Dendritic cell treated with granulocyte-macrophage colony-stimulating factor and Interleukin-4, amounts not matched to agents 40 ng/mL and 50 ng/mL, for 4 days (primary cell): ENCODE measurements at regions of chr11 and their contacts with region 1.

Region 1: GRCh38 chr11:111878849-111879636 is at the starts of genes CFAP68 and FDXACB1:
- H3K4me3 Mint-ChIP-seq: peak within 1 kb of the TSS; percentile 94
- H3K27ac Mint-ChIP-seq: peak within 1 kb of the TSS; percentile 97
- H3K4me1 Mint-ChIP-seq: peaks cover 29% of the 10 kb centered on the region
- H3K27me3 Mint-ChIP-seq: no peaks in the 10 kb centered on the region

Region 2: DNA sequence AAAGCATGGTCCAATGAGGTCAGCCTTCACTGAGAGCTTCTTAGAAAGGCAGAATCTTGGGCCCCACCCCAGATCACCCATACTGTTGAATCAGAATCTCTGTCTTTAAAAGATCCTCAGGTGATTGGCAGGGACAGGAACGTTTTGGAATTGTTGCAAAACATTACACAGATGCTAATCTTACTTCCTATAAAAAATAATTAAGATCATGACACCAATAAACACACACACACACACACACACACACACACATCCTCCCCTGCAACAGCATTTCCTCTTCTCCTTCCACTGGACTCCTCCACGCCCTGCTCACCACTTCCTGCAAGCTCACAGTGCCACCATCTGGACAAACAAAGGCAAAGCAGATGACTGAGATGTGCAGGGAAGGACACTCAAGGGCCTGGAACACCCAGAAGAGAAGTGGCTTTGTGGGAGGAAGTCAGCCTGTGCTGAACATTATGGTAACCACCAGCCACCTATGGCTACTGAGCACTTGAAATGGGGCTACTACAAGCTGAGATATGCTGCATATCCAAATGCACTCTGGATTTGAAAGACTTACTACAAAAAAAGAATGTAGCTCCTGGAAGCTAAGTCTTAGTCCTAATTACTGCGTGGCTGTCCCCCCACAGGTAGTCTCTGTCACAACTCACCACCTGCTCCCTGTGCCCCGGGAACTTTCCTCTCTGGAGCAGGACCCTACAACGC is 432.5 kb before region 1 on chr11:
- intact Hi-C with region 1: no loop called
- H3K4me3 Mint-ChIP-seq: no peak overlapping the region
- H3K27ac Mint-ChIP-seq: no peak overlapping the region
- H3K4me1 Mint-ChIP-seq: peaks cover 16% of the 10 kb centered on the region
- H3K27me3 Mint-ChIP-seq: peaks cover 3% of the 10 kb centered on the region

Region 3: DNA sequence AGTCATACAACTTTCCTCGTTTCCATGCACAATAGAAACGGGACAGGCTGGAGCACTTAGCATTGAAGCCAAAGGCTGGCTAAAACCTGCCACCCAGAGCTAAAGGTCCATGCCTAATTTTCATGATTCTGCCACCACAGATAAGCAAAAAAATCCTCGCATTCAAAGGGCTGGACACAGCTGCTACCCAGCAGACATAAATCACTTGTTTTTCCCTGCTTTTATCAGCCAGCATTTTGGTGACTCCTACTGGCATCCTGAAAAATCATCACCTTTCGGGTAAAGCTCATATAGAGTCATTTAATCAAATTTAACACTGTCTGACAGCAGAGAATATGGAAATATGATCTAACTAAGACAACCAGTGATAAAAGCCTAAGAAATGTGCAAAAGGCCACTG is 45.5 kb before region 1 on chr11:
- intact Hi-C with region 1: no loop called
- H3K4me3 Mint-ChIP-seq: no peak overlapping the region
- H3K27ac Mint-ChIP-seq: no peak overlapping the region
- H3K4me1 Mint-ChIP-seq: no peaks in the 10 kb centered on the region
- H3K27me3 Mint-ChIP-seq: no peaks in the 10 kb centered on the region

Region 4: GRCh38 chr11:112024773-112025678 is 146.0 kb after region 1 on chr11 and contains the start of gene DLAT:
- intact Hi-C with region 1: loop called (anchors 2 kb)
- H3K4me3 Mint-ChIP-seq: peak within 1 kb of the TSS; percentile 98
- H3K27ac Mint-ChIP-seq: peak within 1 kb of the TSS; percentile 96
- H3K4me1 Mint-ChIP-seq: peaks cover 11% of the 10 kb centered on the region
- H3K27me3 Mint-ChIP-seq: no peaks in the 10 kb centered on the region